Right lobe of liver (tissue), 6 donors: ENCODE measurements at regions of chr18 and their contacts with region 1.

Region 1: DNA sequence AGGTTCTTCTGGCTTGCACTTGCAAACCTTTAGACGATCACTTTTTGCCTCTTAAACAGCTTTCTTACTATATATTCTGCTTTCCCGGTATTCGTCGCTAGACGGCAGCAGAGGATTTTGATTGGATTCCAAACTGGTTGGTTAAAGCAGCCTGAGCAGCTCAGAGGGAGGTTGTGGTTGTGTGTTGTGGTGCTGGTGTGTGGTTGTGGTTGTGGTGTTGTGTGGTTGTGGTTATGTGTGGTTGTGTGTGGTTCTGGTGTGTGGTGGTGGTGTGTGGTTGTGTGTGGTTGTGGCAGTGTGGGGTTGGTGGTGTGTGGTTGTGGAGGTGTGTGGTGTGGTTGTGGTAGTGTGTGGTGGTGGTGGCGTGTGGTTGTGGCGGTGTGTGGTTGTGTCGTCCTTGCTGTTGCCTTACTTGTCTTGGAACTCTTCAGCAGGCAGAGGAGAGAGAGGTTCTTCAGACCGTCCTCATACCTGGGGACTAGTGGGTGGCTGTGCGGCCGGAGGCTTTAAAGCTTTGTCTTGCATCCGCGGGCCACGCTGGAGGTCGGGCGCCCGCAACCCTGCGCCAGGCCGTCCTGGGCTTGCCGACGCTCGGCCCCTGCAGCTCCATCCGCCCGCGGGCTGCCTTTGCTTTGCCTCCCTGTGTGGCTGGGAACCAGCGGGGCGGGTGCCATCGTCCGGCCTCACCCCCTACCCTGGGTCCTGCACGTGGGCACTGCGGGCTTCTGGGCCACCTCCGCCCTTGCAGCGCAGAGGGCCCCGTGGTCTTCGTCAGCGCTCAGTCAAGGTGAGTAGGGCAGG is 190.8 kb downstream of the ARHGAP28 start:
- DNase-seq: peak in 1 of 3 donors; percentile 53
- ATAC-seq: peak; percentile 75 to 79 (median 78)
- H3K4me3 ChIP-seq: no peak overlapping the region
- H3K27ac ChIP-seq: no peak overlapping the region
- H3K4me1 ChIP-seq: no peaks in the 10 kb centered on the region
- H3K27me3 ChIP-seq: no peaks in the 10 kb centered on the region
- CTCF ChIP-seq: peak; percentile 53 to 61 (median 60)
- POLR2A ChIP-seq: no peak

Region 2: GRCh38 chr18:6980363-6980762 is 60.1 kb after region 1 on chr18:
- intact Hi-C with region 1: no loop called
- DNase-seq: no peak
- ATAC-seq: no peak
- H3K4me3 ChIP-seq: no peak overlapping the region
- H3K27ac ChIP-seq: no peak overlapping the region
- H3K4me1 ChIP-seq: no peaks in the 10 kb centered on the region
- H3K27me3 ChIP-seq: no peaks in the 10 kb centered on the region
- CTCF ChIP-seq: no peak
- POLR2A ChIP-seq: no peak

Region 3: DNA sequence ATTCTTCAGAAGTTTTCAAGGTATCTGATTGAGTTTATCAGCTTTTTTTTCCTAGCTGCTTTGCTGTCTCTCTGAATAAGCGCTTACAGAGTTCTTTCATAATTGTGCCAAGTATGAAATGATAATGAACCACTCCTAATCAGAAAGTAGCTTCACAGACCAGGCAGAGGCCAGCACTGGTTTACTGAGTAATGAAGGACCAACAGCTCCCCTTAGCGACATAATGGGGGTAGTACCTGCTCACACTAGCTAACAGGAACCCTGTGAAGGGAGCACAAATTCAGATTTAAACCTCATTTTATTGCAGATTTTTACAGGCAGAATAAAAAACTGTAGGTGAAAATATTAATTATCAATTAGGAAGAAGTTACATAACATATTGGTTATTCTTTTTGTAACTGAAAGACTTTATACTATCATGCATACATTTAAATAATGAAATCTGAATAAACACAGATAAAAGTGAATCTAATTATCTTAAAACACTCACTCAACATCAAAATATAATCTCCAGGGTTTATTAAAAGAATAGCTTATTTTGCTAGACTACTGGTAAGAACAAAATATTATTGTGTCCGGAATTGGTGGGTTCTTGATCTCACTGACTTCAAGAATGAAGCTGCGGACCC is 256.9 kb after region 1 on chr18:
- intact Hi-C with region 1: loop called in 1 of 2 experiments (anchors 10 kb)
- DNase-seq: peak in 1 of 3 donors; percentile 43
- ATAC-seq: peak; percentile 72 to 90 (median 88)
- H3K4me3 ChIP-seq: no peak overlapping the region
- H3K27ac ChIP-seq: no peak overlapping the region
- H3K4me1 ChIP-seq: peaks cover 0 to 3% (median 0%) of the 10 kb centered on the region in 4 donors
- H3K27me3 ChIP-seq: no peaks in the 10 kb centered on the region
- CTCF ChIP-seq: peak; percentile 55 to 69 (median 64)
- POLR2A ChIP-seq: no peak